Panc1 (cell line): ENCODE measurements at regions of chr14 and their contacts with region 1.

Region 1: DNA sequence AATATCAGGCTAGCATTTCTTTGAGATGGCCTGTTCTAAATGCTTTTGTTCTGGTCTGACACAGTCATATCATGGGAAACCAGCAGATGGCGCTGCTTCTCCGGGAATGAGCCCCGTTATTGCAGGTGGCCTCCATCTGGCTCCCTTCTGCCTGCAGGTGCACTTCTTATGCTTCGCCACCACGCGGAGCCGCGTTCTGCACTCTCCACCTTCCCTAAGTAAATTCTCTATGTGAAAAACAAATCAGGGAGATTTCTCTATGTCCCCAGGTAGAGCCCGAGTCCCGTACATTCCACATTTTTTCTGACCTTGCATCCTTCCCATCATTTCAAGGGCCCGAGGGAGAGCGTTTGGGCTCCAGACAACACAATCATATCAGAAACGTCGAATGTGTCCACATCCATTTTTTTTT is 26.2 kb downstream of the GLRX5 start:
- DNase-seq: peak; percentile 78
- ATAC-seq: peak; percentile 96
- H3K4me3 ChIP-seq: no peak overlapping the region
- H3K27ac ChIP-seq: no peak overlapping the region
- H3K4me1 ChIP-seq: no peaks in the 10 kb centered on the region
- H3K27me3 ChIP-seq: no peaks in the 10 kb centered on the region
- CTCF ChIP-seq: peak; percentile 92

Region 2: GRCh38 chr14:95683793-95684192 is 122.8 kb after region 1 on chr14:
- CTCF ChIA-PET with region 1: no interaction called
- POLR2A ChIA-PET with region 1: no interaction called
- in situ Hi-C with region 1: no loop called
- intact Hi-C with region 1: loop called (anchors 5 kb)
- DNase-seq: peak; percentile 35
- ATAC-seq: no peak
- H3K4me3 ChIP-seq: no peak overlapping the region
- H3K27ac ChIP-seq: no peak overlapping the region
- H3K4me1 ChIP-seq: no peaks in the 10 kb centered on the region
- H3K27me3 ChIP-seq: no peaks in the 10 kb centered on the region
- CTCF ChIP-seq: peak; percentile 63

Region 3: GRCh38 chr14:95774265-95775160 is 213.5 kb after region 1 on chr14:
- CTCF ChIA-PET with region 1: no interaction called
- POLR2A ChIA-PET with region 1: no interaction called
- in situ Hi-C with region 1: no loop called
- intact Hi-C with region 1: loop called (anchors 1 kb)
- DNase-seq: peak; percentile 58
- ATAC-seq: 0 out of 2 replicates have a peak, but pooled peaks have one; percentile 48
- H3K4me3 ChIP-seq: no peak overlapping the region
- H3K27ac ChIP-seq: no peak overlapping the region
- H3K4me1 ChIP-seq: no peaks in the 10 kb centered on the region
- H3K27me3 ChIP-seq: no peaks in the 10 kb centered on the region; the same call in 1 of the 2 replicates
- CTCF ChIP-seq: peak; percentile 85

Region 4: GRCh38 chr14:95835331-95835730 is 274.3 kb after region 1 on chr14:
- CTCF ChIA-PET with region 1: interaction called, 12 read pairs
- POLR2A ChIA-PET with region 1: no interaction called
- in situ Hi-C with region 1: no loop called
- intact Hi-C with region 1: no loop called
- DNase-seq: no peak
- ATAC-seq: no peak
- H3K4me3 ChIP-seq: no peak overlapping the region
- H3K27ac ChIP-seq: no peak overlapping the region
- H3K4me1 ChIP-seq: no peaks in the 10 kb centered on the region
- H3K27me3 ChIP-seq: no peaks in the 10 kb centered on the region
- CTCF ChIP-seq: no peak